ENCODE measurements at regions of chr14 and their contacts with region 1.

Region 1: DNA sequence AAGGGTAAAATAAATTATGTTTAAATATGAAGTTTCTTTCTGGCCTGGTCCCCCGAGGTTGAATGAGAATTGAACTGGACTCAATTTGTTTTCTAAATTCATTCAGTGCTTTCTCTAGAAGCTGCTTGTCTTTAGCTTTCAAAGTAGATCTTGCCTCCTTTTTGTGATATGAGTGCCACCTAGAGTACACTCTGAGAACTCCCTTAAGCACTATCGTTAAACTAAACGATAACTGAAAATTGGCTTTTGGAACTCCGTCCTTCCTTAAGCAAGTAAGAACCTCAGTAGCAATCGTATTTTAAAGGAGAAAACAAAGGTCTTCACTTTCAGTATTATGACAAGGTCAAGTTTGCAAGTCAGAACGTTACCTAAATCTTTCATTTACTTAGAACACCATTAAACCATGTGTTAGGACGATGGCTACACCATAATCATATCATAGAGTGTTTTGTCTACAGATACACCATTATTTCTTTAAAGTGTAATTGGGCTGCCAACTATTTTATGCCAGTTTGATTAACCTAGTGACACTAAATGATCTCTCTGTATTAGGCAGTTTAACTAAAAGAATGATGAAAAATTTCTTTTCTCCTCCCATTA is 364.8 kb downstream of the SNAPC1 start:
- DNase-seq: peak; percentile 54 to 70 (median 61)
- H3K4me3 ChIP-seq: no peak overlapping the region
- H3K27ac ChIP-seq: no peak overlapping the region
- H3K4me1 ChIP-seq: no peaks in the 10 kb centered on the region
- H3K27me3 ChIP-seq: peaks cover 11 to 45% (median 25%) of the 10 kb centered on the region in 5 experiments

Region 2: DNA sequence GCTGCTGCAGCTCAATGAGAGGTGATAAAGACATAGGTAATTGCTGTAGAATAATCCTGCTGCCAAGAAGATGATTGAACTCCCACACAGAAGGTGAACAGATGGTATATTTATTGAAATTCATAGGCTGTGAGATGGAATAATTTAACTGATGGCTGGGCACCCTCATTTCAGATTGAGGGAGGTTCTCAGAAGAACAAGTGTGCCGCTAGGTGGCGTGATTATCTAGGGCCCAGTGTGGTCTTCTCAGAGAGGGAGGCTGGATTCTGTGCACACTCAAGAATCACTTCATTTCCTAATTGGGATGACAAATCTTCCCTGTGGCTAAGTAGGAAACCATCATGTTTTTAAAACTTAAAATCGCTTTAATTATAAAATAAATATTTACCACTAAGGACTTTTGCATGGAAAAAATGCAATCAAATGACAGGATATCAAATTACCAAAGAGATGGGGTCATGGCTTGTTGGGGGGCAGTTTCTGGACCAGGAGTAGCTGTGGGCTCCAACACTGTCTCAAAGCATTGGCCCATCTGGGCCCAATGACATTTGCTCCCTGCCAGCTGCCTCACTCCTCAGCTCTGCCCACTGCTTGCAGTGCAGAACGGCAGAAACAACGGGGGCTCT is 232.4 kb before region 1 on chr14:
- CTCF ChIA-PET with region 1: interaction called, 48 read pairs
- POLR2A ChIA-PET with region 1: no interaction called
- DNase-seq: peak; percentile 54 to 73 (median 64)
- H3K4me3 ChIP-seq: no peak overlapping the region
- H3K27ac ChIP-seq: no peak overlapping the region
- H3K4me1 ChIP-seq: no peaks in the 10 kb centered on the region
- H3K27me3 ChIP-seq: peaks cover 0 to 16% (median 6%) of the 10 kb centered on the region in 5 experiments

Region 3: DNA sequence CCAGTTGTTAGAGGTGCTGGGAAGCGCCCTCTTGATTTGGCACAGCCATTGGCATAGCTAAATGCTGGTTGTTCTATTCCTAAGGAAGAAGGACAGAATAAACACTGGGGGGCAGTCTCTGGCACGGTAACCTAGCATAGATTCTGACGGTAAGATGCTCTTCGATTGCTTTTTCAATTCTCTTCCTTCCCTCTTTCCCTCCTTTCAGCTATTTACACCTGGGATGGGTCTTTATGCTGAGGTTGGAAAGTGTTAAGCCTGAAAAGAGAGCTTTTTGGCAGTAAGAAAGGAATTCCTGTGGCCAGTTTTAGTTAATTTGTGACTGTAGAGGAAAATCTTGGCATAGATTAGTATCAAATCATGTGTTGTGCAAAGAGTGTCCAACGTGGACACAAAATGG is 201.9 kb before region 1 on chr14:
- CTCF ChIA-PET with region 1: interaction called, 17 read pairs
- POLR2A ChIA-PET with region 1: no interaction called
- DNase-seq: peak; percentile 19 to 36 (median 31)
- H3K4me3 ChIP-seq: no peak overlapping the region
- H3K27ac ChIP-seq: no peak overlapping the region
- H3K4me1 ChIP-seq: peaks cover 0 to 3% (median 0%) of the 10 kb centered on the region in 4 experiments
- H3K27me3 ChIP-seq: peaks cover 2 to 33% (median 6%) of the 10 kb centered on the region in 5 experiments

Measured in common myeloid progenitor, CD34-positive (primary cell).